ENCODE measurements at regions of chr12 and their contacts with region 1.

Region 1: GRCh38 chr12:14365294-14366208 is at the start of gene ATF7IP:
- DNase-seq: peak; percentile 98
- H3K4me3 Mint-ChIP-seq: peak within 1 kb of the TSS; percentile 85
- H3K27ac Mint-ChIP-seq: peak within 1 kb of the TSS; percentile 98
- H3K4me1 Mint-ChIP-seq: peaks cover 38% of the 10 kb centered on the region
- H3K27me3 Mint-ChIP-seq: no peaks in the 10 kb centered on the region
- total RNA-seq, gene ATF7IP: 131 to 141 TPM

Region 2: DNA sequence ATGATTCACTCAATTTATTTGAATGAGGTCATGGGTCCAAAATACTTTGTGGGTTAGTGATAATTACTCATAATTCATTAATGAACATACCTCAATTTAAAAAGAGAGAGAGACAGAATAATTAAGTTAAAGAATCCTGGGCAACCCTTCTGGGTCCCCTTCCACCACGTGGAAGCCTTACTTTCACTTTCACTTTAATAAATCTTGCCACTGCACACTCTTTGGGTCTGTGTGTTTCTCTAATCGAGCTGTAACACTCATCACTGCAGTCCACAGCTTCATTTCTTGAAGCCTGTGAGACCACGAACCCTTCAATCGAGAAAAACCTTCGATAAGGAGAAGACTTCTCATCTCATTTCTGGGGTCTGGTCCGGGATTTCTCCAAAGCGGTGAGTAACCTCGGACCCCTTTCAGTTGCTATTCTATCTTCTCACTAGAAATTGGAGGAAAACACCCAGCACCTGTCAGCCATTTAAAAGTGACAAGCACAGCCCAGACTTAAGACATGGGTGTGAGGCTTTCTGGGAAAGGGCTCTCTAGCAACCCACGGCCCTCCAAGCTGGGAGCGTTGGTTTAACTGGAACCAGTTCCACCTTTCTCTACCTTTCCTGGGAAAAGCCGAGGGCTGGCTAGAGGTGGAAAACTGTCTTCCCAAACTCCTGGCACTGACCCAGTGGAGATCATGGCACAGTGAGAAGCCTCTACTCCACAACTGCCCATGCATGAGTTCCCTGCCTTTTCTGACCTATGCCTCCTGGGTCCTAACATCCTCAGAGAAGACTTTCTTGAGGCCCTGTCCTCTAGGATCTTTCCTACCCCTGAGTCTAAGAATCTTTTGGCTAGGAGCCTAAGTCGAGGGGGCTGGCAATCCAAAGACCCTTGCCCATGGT is 148.9 kb before region 1 on chr12:
- CTCF ChIA-PET with region 1: no interaction called
- intact Hi-C with region 1: loop called (anchors 1 kb)
- DNase-seq: no peak
- H3K4me3 Mint-ChIP-seq: no peak overlapping the region
- H3K27ac Mint-ChIP-seq: peak overlapping the region; percentile 70
- H3K4me1 Mint-ChIP-seq: peaks cover 24% of the 10 kb centered on the region
- H3K27me3 Mint-ChIP-seq: no peaks in the 10 kb centered on the region

Region 3: DNA sequence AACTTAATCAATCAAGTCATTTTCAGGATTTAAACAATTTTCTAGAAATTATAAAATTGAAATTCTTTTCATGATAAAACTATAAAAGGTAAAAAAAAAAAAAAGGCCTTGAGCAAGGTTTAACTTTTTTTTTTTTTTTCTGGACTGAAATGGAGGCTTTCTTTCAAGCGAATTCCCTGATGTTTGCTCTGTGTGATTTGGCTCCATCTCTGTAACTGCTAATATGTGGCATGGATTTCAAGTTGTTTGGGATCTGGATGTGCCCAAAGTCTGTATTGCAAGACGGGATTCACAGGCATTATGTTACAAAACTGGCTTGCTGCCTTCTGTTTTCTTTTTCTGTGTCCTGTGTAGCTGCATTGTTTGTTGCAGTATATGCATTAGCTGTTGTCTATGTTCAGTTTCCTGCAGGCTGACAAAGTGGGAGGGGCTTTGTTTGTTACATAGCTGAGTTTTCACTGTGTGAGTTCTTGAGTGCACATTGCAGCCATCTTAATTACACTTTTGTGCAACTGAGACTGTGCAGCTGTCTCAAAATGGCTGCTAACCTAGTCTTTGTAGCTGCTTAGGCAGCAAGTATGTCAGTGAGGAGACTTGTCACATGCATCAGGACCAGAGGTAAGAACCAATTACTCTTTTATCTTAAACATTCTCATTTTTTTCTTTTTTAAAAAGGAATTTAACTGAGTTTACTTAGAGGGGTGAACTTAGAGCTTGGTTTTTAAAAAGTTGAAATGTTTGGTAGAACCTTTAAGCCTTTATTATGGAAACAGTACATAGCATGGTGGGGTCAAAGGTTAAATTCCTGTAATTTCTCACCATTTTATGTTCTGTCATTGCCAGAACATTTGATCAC is 19.5 kb after region 1 on chr12:
- CTCF ChIA-PET with region 1: interaction called, 24 read pairs
- intact Hi-C with region 1: loop called (anchors 1 kb)
- DNase-seq: peak; percentile 83
- H3K4me3 Mint-ChIP-seq: peak overlapping the region; percentile 73
- H3K27ac Mint-ChIP-seq: peak overlapping the region; percentile 97
- H3K4me1 Mint-ChIP-seq: peaks cover 63% of the 10 kb centered on the region
- H3K27me3 Mint-ChIP-seq: no peaks in the 10 kb centered on the region

Region 4: DNA sequence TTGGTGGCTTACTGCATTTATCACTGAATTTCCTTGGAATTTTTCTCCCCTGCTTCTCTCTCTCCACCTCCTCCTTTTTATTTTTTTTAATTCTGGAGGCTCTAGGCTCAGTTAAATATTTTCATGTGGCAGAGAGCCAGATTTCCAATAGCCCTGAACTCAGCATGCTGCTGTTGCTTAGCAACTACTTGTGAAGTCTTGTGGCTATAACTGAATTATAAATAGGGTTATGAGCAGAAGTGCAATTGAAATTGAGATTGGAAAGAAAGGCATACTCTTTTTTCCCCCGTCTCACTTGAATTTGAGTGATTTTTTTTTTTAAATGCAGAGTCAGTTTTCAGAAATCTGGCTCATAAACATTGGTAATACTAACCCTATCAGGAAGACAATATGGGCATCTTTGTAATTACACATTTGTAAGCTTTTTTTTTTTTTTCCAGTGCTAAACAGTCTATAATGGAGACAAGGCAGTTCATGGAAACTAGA is 38.2 kb after region 1 on chr12:
- CTCF ChIA-PET with region 1: interaction called, 8 read pairs
- intact Hi-C with region 1: loop called (anchors 1 kb)
- DNase-seq: no peak
- H3K4me3 Mint-ChIP-seq: peak overlapping the region; percentile 28
- H3K27ac Mint-ChIP-seq: peak overlapping the region; percentile 63
- H3K4me1 Mint-ChIP-seq: peaks cover 82% of the 10 kb centered on the region
- H3K27me3 Mint-ChIP-seq: no peaks in the 10 kb centered on the region

Region 5: DNA sequence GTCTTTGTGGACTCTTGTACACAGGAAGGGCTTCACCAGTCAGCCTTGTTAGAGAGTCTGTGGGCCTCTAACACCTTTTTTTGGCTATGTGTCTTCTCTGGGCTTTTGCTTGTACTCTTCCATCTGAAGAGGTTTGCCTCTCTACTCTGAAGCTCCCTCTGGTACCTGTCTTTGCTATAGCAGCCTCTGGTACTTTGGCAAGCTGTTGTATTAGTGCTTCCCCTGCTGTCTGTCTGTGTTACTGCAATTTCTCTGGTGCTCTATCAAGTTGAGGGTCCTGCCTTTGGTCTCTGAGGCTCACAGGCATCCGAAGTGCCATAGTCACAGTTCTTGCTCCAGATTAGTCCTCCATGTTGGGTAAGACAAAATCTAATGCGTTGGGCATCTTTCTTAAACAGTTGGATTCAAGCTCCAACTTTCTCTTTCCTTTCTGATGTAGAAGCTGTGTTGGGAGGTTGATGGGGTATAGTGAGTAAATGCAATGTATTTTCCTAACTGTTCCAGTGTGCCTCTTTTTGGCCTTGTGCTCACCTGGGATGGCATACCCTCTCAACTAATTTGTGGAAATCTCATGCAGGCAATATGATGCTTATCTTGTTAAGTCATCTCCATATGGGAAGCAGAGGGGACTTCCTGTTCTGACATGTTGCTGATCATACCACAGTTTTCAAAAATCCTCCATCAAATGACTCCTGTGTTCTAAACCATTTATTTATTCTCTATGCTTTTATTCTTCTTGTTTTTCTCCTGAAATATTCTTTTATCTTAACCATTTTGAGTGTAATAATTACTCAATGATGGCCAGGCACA is 88.8 kb after region 1 on chr12:
- CTCF ChIA-PET with region 1: interaction called, 4 read pairs
- intact Hi-C with region 1: loop called (anchors 1 kb)
- DNase-seq: peak; percentile 31
- H3K4me3 Mint-ChIP-seq: no peak overlapping the region
- H3K27ac Mint-ChIP-seq: peak overlapping the region; percentile 82
- H3K4me1 Mint-ChIP-seq: peaks cover 54% of the 10 kb centered on the region
- H3K27me3 Mint-ChIP-seq: no peaks in the 10 kb centered on the region

Region 6: DNA sequence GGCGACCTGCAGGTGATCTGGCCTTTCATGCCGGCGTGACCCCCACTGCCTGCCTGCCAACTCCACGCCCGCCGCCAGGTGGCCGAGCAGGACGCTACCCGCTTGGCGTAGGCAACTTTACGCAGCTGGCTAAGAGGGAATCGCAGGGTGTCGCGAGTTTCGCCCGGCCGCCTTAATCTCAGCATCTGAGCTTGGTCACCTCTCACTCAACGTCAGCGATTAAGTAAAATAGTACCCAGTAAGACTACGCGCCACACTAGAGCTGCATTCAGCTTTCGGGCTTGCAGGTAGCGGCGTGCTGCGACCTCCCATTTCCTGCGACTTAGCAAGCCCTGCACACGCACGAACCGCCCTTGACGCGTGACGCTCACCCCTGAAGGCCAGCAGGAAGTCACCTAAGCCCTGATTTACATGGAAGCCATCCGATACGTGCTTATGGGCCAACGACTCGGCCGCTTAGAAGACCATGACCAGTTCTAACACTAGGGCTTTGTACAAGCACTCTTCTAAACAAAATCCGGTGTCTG is 404.5 kb after region 1 on chr12:
- CTCF ChIA-PET with region 1: no interaction called
- intact Hi-C with region 1: loop called (anchors 1 kb)
- DNase-seq: peak; percentile 89
- H3K4me3 Mint-ChIP-seq: peak overlapping the region; percentile 97
- H3K27ac Mint-ChIP-seq: peak overlapping the region; percentile 98
- H3K4me1 Mint-ChIP-seq: peaks cover 38% of the 10 kb centered on the region
- H3K27me3 Mint-ChIP-seq: no peaks in the 10 kb centered on the region

Region 7: DNA sequence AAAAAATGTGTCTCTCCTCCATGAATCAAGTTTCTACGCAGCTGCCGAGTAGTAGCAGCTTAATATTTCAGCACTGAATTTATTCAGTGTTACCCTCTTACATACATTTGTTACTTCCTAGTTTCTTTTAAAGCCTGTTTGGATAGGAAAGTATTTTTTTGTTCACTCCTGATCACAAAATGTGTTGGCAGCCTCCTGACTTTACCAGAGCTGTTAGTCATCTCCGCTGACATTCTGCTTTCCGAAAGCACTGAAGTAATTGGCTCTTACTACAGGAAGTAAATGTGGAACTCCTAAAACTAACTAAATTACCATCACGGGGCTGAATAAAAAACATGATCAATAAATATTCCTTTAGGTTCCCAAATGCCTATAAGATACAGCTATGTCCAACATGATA is 1198.1 kb after region 1 on chr12:
- CTCF ChIA-PET with region 1: no interaction called
- intact Hi-C with region 1: loop called (anchors 1 kb)
- DNase-seq: peak; percentile 67
- H3K4me3 Mint-ChIP-seq: peak overlapping the region; percentile 58
- H3K27ac Mint-ChIP-seq: peak overlapping the region; percentile 90
- H3K4me1 Mint-ChIP-seq: peaks cover 81% of the 10 kb centered on the region
- H3K27me3 Mint-ChIP-seq: no peaks in the 10 kb centered on the region